ENCODE measurements at regions of chr4 and their contacts with region 1.

Region 1: GRCh38 chr4:28225050-28225449 is 1364.4 kb downstream of the STIM2 start:
- DNase-seq: peak in 3 of 10 donors; percentile 8 to 75 (median 31)

Region 2: DNA sequence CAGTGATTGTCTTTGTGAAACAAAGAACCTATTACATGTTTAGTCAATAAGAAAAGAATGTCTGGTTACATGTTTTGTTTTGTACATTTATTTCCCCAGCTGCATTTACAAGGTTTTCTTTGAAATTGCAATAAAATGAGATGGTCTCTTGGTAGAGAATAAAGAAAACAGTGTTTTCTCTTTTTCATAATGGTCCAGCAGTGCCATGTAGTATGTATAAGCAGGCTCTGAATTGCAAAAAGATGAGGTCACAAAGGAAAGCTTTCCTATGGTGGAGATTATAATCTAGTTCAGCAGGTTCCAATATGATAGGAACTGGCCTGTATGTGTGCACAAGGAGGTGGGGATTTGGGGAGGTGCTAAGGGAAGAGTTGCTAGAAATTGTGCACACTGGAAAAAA is 52.9 kb after region 1 on chr4:
- intact Hi-C with region 1: loop called (anchors 5 kb)
- DNase-seq: no peak

Region 3: GRCh38 chr4:28350485-28350884 is 125.4 kb after region 1 on chr4:
- intact Hi-C with region 1: loop called (anchors 5 kb)
- DNase-seq: no peak

Region 4: GRCh38 chr4:28402751-28403150 is 177.7 kb after region 1 on chr4:
- intact Hi-C with region 1: no loop called
- DNase-seq: no peak